B cell (primary cell): ENCODE measurements at regions of chr1 and their contacts with region 1.

Region 1: GRCh38 chr1:236281654-236282424 is at the start of gene ERO1B:
- DNase-seq: peak; percentile 97
- ATAC-seq: peak; percentile 94
- H3K4me3 ChIP-seq: peak within 1 kb of the TSS; percentile 73 to 99 (median 94)
- H3K4me3 Mint-ChIP-seq: peak within 1 kb of the TSS; percentile 98
- H3K27ac ChIP-seq: peak within 1 kb of the TSS; percentile 64 to 89
- H3K27ac Mint-ChIP-seq: peak within 1 kb of the TSS; percentile 79
- H3K4me1 ChIP-seq: peaks cover 35% of the 10 kb centered on the region in 2 donors
- H3K4me1 Mint-ChIP-seq: peaks cover 54% of the 10 kb centered on the region
- H3K27me3 ChIP-seq: no peaks in the 10 kb centered on the region
- H3K27me3 Mint-ChIP-seq: no peaks in the 10 kb centered on the region
- CTCF ChIP-seq: no peak
- total RNA-seq, gene ERO1B: 24.3 and 25.6 TPM in 2 replicates

Region 2: DNA sequence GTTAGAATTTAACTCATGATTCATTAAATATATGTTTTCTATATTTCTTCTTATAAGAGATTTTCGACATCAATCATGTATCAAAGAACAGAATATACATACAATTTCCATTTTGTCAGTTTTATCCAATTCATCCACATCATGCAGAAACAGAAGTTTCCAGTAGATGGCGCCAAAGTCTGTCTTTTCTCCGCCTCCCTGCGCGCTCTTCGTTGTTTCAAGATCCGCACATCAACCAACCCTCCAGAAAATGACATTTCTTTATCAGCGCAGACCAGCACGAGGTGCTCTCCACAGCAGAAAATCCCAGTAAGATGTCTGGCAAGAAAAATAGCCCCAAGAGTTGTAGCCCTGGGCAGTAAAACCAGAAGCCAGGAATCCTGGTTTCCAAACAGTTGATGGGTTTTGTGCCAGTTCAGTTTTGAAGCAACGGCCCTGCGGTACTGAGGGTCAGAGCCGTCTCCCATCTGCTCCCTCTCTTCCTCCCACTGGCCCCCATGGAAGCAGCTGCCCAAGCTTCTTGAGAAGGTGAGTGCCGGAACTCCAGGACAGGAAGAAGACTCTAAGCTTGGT is 178.1 kb before region 1 on chr1:
- CTCF ChIA-PET with region 1: interaction called, 12 read pairs
- POLR2A ChIA-PET with region 1: no interaction called
- intact Hi-C with region 1: loop called (anchors 10 kb)
- DNase-seq: peak; percentile 74
- ATAC-seq: peak; percentile 56
- H3K4me3 ChIP-seq: no peak overlapping the region
- H3K4me3 Mint-ChIP-seq: no peak overlapping the region
- H3K27ac ChIP-seq: no peak overlapping the region
- H3K27ac Mint-ChIP-seq: no peak overlapping the region
- H3K4me1 ChIP-seq: peaks cover 0 to 3% of the 10 kb centered on the region in 2 donors
- H3K4me1 Mint-ChIP-seq: peaks cover 2% of the 10 kb centered on the region
- H3K27me3 ChIP-seq: peaks cover 0 to 3% (median 0%) of the 10 kb centered on the region in 4 experiments
- H3K27me3 Mint-ChIP-seq: peaks cover 4% of the 10 kb centered on the region
- CTCF ChIP-seq: peak; percentile 94

Region 3: GRCh38 chr1:236142253-236143103 is 139.4 kb before region 1 on chr1 and contains the start of gene GPR137B:
- CTCF ChIA-PET with region 1: no interaction called
- POLR2A ChIA-PET with region 1: no interaction called
- intact Hi-C with region 1: loop called (anchors 5 kb)
- DNase-seq: peak; percentile 74
- ATAC-seq: peak; percentile 76
- H3K4me3 ChIP-seq: peak within 1 kb of the TSS; percentile 51 to 72 (median 62)
- H3K4me3 Mint-ChIP-seq: peak within 1 kb of the TSS; percentile 97
- H3K27ac ChIP-seq: peak within 1 kb of the TSS; percentile 7 to 12
- H3K27ac Mint-ChIP-seq: peak within 1 kb of the TSS; percentile 89
- H3K4me1 ChIP-seq: peaks cover 20 to 32% of the 10 kb centered on the region in 2 donors
- H3K4me1 Mint-ChIP-seq: peaks cover 29% of the 10 kb centered on the region
- H3K27me3 ChIP-seq: peaks cover 0 to 51% (median 19%) of the 10 kb centered on the region in 4 experiments
- H3K27me3 Mint-ChIP-seq: peaks cover 63% of the 10 kb centered on the region
- CTCF ChIP-seq: no peak
- total RNA-seq, gene GPR137B: 11.3 and 11.8 TPM in 2 replicates

Region 4: GRCh38 chr1:236156512-236157208 is 125.2 kb before region 1 on chr1:
- CTCF ChIA-PET with region 1: no interaction called
- POLR2A ChIA-PET with region 1: interaction called, 4 read pairs
- intact Hi-C with region 1: loop called (anchors 2 kb)
- DNase-seq: peak; percentile 84
- ATAC-seq: peak; percentile 89
- H3K4me3 ChIP-seq: no peak overlapping the region
- H3K4me3 Mint-ChIP-seq: peak overlapping the region; percentile 73
- H3K27ac ChIP-seq: no peak overlapping the region
- H3K27ac Mint-ChIP-seq: peak overlapping the region; percentile 84
- H3K4me1 ChIP-seq: peaks cover 31 to 48% of the 10 kb centered on the region in 2 donors
- H3K4me1 Mint-ChIP-seq: peaks cover 59% of the 10 kb centered on the region
- H3K27me3 ChIP-seq: peaks cover 0 to 36% (median 16%) of the 10 kb centered on the region in 4 experiments
- H3K27me3 Mint-ChIP-seq: peaks cover 29% of the 10 kb centered on the region
- CTCF ChIP-seq: no peak

Region 5: GRCh38 chr1:236523701-236524141 is 241.9 kb after region 1 on chr1 and contains the start of gene LGALS8:
- CTCF ChIA-PET with region 1: no interaction called
- POLR2A ChIA-PET with region 1: no interaction called
- intact Hi-C with region 1: loop called (anchors 1 kb)
- DNase-seq: peak; percentile 87
- ATAC-seq: peak; percentile 64
- H3K4me3 ChIP-seq: peak within 1 kb of the TSS; percentile 70 to 99 (median 96)
- H3K4me3 Mint-ChIP-seq: peak within 1 kb of the TSS; percentile 99
- H3K27ac ChIP-seq: peak within 1 kb of the TSS; percentile 78
- H3K27ac Mint-ChIP-seq: peak within 1 kb of the TSS; percentile 97
- H3K4me1 ChIP-seq: peaks cover 8 to 9% of the 10 kb centered on the region in 2 donors
- H3K4me1 Mint-ChIP-seq: peaks cover 16% of the 10 kb centered on the region
- H3K27me3 ChIP-seq: no peaks in the 10 kb centered on the region
- H3K27me3 Mint-ChIP-seq: no peaks in the 10 kb centered on the region
- CTCF ChIP-seq: no peak
- total RNA-seq, gene LGALS8: 64.9 and 67.0 TPM in 2 replicates

Region 6: DNA sequence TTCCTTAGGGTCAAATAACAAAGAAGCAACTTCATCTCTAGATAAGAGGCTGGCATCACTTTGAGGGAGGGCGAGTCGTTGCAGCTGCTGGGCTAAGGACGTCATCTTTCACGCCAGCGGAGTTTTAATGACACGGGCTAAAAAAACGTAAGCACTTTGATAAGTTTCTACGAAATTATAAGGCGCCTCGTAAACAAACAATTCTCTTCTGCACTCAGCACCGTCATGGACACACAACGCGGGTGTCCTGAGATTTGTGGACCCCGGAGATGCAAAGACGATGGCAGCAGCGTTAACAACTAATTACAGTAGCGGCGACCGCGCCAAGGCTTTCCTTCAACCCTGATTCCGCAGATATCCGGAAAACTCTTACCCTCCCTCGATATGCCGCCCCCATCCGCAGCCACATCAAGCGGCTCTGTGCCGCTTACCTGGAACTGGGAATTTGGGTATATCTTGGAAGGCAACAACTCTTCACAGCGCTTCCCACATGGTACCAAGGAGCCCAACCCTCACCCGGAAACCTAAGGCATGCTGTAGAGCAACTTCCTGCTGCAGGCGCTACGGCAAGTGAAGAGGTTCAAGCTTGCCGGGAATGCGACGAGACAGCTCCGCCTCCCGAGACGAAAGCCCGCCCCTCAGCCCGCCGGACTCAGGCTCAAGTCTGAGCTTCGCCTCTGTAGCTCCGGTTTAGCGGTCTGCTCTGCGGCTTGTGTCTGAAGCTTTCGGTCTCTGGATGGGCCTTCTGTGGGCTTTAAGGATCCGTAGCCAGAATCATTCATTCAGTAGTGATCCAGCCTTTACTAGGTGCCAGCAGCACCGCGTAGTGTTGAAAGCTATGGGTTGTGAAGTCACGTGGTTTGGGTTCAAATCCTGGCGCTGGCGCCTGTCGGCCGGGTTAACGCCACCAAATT is 322.4 kb after region 1 on chr1 and contains the start of gene HEATR1:
- CTCF ChIA-PET with region 1: no interaction called
- POLR2A ChIA-PET with region 1: no interaction called
- intact Hi-C with region 1: loop called (anchors 2 kb)
- DNase-seq: peak; percentile 92
- ATAC-seq: peak; percentile 97
- H3K4me3 ChIP-seq: peak within 1 kb of the TSS; percentile 77 to 99 (median 80)
- H3K4me3 Mint-ChIP-seq: peak within 1 kb of the TSS; percentile 99
- H3K27ac ChIP-seq: peak within 1 kb of the TSS; percentile 26 to 47
- H3K27ac Mint-ChIP-seq: peak within 1 kb of the TSS; percentile 97
- H3K4me1 ChIP-seq: peaks cover 15 to 16% of the 10 kb centered on the region in 2 donors
- H3K4me1 Mint-ChIP-seq: peaks cover 32% of the 10 kb centered on the region
- H3K27me3 ChIP-seq: peaks cover 0 to 9% (median 4%) of the 10 kb centered on the region in 4 experiments
- H3K27me3 Mint-ChIP-seq: peaks cover 11% of the 10 kb centered on the region
- CTCF ChIP-seq: no peak
- total RNA-seq, gene HEATR1: 50.6 and 56.0 TPM in 2 replicates